ENCODE measurements at regions of chr9 and their contacts with region 1.

Region 1: DNA sequence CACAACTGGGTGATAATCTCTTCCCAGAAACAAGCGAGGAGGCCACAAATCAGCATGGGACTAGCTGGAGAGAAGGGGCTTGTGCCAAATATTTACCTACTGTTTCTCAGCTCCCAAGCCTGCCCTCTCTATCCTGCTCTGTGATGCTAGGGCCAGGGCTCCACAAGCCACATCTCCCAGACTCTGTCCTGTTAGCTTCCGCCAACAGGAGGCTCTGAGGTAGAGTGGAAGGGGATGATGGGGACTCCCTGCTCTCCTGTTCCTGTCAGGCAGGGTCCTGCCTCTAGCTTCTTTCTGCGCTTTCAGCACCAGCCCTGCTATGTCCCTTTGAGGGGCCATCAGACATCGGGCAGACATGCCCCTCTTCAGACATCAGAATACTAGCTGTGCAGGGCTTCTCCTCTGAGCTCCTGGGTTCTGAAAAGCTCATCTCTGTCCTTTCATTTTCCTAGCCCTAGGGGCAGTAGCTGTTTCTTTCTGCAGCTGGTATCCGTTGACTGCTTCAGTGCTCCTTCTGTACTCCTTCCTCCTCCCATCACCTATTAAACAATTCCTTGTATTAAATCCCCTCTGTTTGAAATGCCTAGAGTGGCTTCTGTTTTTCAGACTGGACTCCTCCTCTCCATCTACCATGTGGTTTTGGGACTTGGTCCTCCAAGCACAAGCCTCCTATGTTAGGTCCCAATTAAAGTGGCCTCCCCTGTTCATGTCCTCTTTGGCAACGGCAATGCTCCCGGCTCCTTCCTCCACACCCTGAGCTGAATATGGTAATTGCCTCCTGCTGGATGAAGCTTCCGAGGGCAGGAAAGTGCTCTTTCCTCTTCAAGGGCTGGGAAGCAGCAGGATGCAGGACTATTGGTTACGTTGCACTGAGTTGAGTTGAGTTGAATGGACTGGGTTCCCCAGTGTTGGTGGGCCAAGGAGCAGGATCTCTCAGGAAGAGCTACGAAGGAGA is 161.1 kb upstream of the TBC1D2 start:
- DNase-seq: no peak
- ATAC-seq: peak; percentile 59
- H3K4me3 Mint-ChIP-seq: no peak overlapping the region
- H3K27ac Mint-ChIP-seq: no peak overlapping the region
- H3K4me1 Mint-ChIP-seq: peaks cover 43% of the 10 kb centered on the region
- H3K27me3 Mint-ChIP-seq: peaks cover 2% of the 10 kb centered on the region; the same call in 1 of the 2 replicates
- CTCF ChIP-seq: no peak

Region 2: GRCh38 chr9:98442114-98442513 is 25.5 kb after region 1 on chr9:
- CTCF ChIA-PET with region 1: interaction called, 20 read pairs
- POLR2A ChIA-PET with region 1: no interaction called
- DNase-seq: peak; percentile 33
- ATAC-seq: peak; percentile 98
- H3K4me3 Mint-ChIP-seq: no peak overlapping the region
- H3K27ac Mint-ChIP-seq: no peak overlapping the region
- H3K4me1 Mint-ChIP-seq: peaks cover 5% of the 10 kb centered on the region
- H3K27me3 Mint-ChIP-seq: no peaks in the 10 kb centered on the region; the same call in 1 of the 2 replicates
- CTCF ChIP-seq: no peak

Measured in WTC11 (cell line).